H1 (cell line): ENCODE measurements at regions of chr7 and their contacts with region 1.

Region 1: DNA sequence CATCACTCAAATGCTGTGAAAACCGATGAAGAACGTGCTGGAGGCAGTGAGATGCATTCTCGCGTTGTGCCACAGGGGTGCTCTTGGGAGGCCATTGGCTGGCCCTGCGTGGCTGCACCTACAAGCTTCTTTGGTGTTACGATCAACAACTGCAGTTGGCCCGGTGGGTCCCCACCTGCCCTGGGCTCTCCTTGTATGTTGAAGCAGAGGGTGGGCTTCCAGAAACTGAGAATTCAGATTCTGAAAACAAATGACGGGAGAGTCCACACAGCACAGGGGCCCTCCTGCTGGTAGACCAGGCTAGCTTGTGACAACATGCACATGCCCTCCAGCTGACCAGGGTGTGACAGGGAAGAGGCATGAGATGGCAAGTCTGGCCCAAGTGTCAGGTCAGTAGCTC is 23.7 kb upstream of the DDC start:
- DNase-seq: peak in 1 of 2 experiments; percentile 62
- H3K4me3 ChIP-seq: no peak overlapping the region
- H3K27ac ChIP-seq: no peak overlapping the region
- H3K4me1 ChIP-seq: no peaks in the 10 kb centered on the region; a peak in 1 of 7 replicates
- H3K27me3 ChIP-seq: no peaks in the 10 kb centered on the region
- CTCF ChIP-seq: peak; percentile 47 to 79 (median 58)
- EP300 ChIP-seq: no peak
- POLR2A ChIP-seq: no peak
- RAD21 ChIP-seq: peak; percentile 41 to 59; a peak in 3 of 4 replicates

Region 2: DNA sequence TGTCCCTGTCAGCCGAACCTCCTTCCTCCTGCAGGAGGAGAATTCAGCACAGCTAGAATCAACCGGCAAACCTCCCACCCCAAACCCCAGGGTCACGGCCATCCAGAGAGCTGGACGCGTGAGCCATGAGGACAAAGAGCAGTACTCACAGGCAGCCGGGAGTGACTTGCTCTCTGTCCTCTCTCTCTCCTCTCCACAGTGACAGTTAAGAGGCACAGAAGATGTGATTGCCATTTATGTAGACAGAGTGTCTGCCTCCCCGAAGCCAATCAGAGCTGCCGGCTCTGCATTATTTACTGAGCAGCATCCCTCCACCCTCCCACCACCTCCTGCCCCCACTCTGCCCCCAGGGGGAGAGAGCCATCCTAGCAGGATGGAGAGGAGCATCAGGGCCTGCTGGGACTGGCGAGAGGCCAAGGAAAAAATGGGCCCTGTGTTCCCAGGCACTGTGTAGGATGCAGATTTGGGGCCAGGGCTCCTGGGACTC is 28.0 kb before region 1 on chr7:
- CTCF ChIA-PET with region 1: interaction called, 16 read pairs
- POLR2A ChIA-PET with region 1: no interaction called
- DNase-seq: no peak
- H3K4me3 ChIP-seq: no peak overlapping the region
- H3K27ac ChIP-seq: no peak overlapping the region
- H3K4me1 ChIP-seq: peaks cover 0 to 3% (median 0%) of the 10 kb centered on the region in 4 experiments; a peak in 3 of 7 replicates
- H3K27me3 ChIP-seq: no peaks in the 10 kb centered on the region
- CTCF ChIP-seq: peak in 1 of 3 experiments; percentile 14; a peak in 1 of 4 replicates
- EP300 ChIP-seq: no peak
- POLR2A ChIP-seq: no peak
- RAD21 ChIP-seq: no peak; a peak in 1 of 4 replicates

Region 3: DNA sequence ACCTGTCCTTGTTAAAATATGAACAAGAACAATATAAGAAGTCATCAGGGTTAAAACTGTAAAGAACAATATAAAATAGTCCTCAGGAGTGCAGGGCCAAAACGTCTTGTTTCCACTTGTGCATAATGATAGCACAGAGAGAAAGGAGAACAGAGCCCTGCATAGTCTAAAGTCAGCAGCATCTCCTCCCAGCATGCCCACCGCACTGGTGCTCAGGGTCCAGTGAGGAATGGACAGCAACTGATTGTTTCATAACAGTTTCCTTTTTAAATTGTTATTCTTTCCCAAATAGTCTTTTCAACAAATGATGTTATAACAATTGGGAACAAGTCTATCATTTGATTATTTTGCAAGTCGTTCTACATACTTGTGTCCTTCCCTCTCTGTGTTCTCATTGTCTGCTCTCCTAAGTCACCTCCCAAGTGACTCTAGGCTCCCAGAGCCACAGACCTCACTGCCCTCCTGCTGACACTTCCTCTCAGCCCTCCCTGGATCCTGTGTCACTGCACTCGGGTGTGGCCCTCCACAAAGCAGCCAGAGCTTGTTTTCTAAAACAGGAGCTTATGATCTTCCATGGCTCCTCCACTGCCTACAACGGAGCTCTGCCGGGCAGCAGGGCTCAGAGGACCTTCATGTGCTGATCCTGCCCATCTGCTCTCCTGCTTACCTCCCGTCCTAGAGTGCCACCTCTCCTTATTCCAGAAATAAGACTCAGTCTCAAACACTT is 700.1 kb after region 1 on chr7:
- CTCF ChIA-PET with region 1: no interaction called
- POLR2A ChIA-PET with region 1: no interaction called
- DNase-seq: no peak
- H3K4me3 ChIP-seq: no peak overlapping the region
- H3K27ac ChIP-seq: no peak overlapping the region
- H3K4me1 ChIP-seq: peaks cover 4 to 18% (median 11%) of the 10 kb centered on the region in 4 experiments; a peak in 6 of 7 replicates
- H3K27me3 ChIP-seq: no peaks in the 10 kb centered on the region
- CTCF ChIP-seq: no peak
- EP300 ChIP-seq: no peak
- POLR2A ChIP-seq: no peak
- RAD21 ChIP-seq: no peak